CD4-positive, alpha-beta memory T cell (primary cell): ENCODE measurements at regions of chr10 and their contacts with region 1.

Region 1: GRCh38 chr10:21694631-21695030 is 160.6 kb downstream of the MLLT10 start:
- DNase-seq: no peak
- H3K4me3 ChIP-seq: no peak overlapping the region
- H3K4me3 Mint-ChIP-seq: peak overlapping the region in 1 of 8 donors; percentile 31
- H3K27ac ChIP-seq: no peak overlapping the region
- H3K27ac Mint-ChIP-seq: no peak overlapping the region
- H3K4me1 ChIP-seq: no peaks in the 10 kb centered on the region
- H3K4me1 Mint-ChIP-seq: peaks cover 18 to 26% (median 23%) of the 10 kb centered on the region in 4 donors
- H3K27me3 ChIP-seq: no peaks in the 10 kb centered on the region
- H3K27me3 Mint-ChIP-seq: no peaks in the 10 kb centered on the region

Region 2: DNA sequence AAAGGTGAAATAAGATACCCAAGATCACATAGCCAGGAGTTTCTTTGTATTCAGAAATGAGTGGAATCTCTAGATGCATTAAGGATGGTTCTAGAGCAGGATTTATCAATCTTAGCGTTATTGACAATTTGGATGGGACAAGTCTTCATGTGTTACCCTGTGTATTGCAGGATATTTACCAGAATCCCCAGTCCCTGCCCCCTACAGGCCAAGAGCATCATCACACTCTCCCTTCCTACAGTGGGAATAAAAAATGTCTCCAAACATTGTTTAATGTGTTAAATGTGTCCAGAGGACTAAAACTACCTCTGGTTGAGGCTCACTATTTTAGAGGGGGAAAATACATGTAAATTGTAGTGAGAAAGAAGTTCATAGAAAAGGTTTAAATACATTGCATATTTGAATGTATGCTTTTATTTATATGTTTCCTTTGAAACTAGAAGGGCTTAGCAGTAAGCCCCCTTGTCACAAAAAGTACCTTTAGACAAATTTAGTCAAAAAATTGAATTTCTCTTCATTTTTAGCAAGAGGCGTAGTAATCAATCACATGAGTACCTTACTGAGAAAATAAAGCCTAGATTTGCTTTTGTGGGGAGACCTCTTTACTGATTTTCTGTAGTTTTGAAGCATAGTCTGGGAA is 19.4 kb before region 1 on chr10:
- CTCF ChIA-PET with region 1: interaction called, 11 read pairs
- POLR2A ChIA-PET with region 1: interaction called, 4 read pairs
- intact Hi-C with region 1: no loop called
- DNase-seq: peak in 4 of 5 donors; percentile 11 to 30 (median 14)
- H3K4me3 ChIP-seq: no peak overlapping the region
- H3K4me3 Mint-ChIP-seq: no peak overlapping the region
- H3K27ac ChIP-seq: no peak overlapping the region
- H3K27ac Mint-ChIP-seq: peak overlapping the region in 1 of 7 donors; percentile 58
- H3K4me1 ChIP-seq: no peaks in the 10 kb centered on the region
- H3K4me1 Mint-ChIP-seq: peaks cover under 1 to 8% (median 6%) of the 10 kb centered on the region in 4 donors
- H3K27me3 ChIP-seq: no peaks in the 10 kb centered on the region
- H3K27me3 Mint-ChIP-seq: no peaks in the 10 kb centered on the region